A549 (cell line): ENCODE measurements at regions of chr7 and their contacts with region 1.

Region 1: GRCh38 chr7:22559829-22560489 is 60.0 kb upstream of the STEAP1B start:
- DNase-seq: peak; percentile 80 to 85
- ATAC-seq: peak; percentile 82 to 92
- H3K4me3 ChIP-seq: no peak overlapping the region
- H3K27ac ChIP-seq: peak overlapping the region in 1 of 2 experiments; percentile 74; a peak in 3 of 6 replicates
- H3K4me1 ChIP-seq: peaks cover 46% of the 10 kb centered on the region
- CTCF ChIP-seq: peak; percentile 99
- EP300 ChIP-seq: no peak
- POLR2A ChIP-seq: no peak
- RAD21 ChIP-seq: peak; percentile 90 to 99

Region 2: GRCh38 chr7:22542254-22542653 is 17.7 kb before region 1 on chr7:
- CTCF ChIA-PET with region 1: interaction called, 27 read pairs
- POLR2A ChIA-PET with region 1: no interaction called
- DNase-seq: no peak
- ATAC-seq: no peak
- H3K4me3 ChIP-seq: no peak overlapping the region
- H3K27ac ChIP-seq: no peak overlapping the region
- H3K4me1 ChIP-seq: no peaks in the 10 kb centered on the region
- CTCF ChIP-seq: no peak
- EP300 ChIP-seq: no peak
- POLR2A ChIP-seq: no peak
- RAD21 ChIP-seq: no peak

Region 3: GRCh38 chr7:22586786-22587140 is 26.8 kb after region 1 on chr7:
- CTCF ChIA-PET with region 1: interaction called, 29 read pairs
- POLR2A ChIA-PET with region 1: no interaction called
- DNase-seq: peak in 1 of 2 experiments; percentile 46
- ATAC-seq: peak in 1 of 2 experiments; percentile 72; a peak in 3 of 6 replicates
- H3K4me3 ChIP-seq: no peak overlapping the region
- H3K27ac ChIP-seq: peak overlapping the region in 1 of 2 experiments; percentile 70; a peak in 3 of 6 replicates
- H3K4me1 ChIP-seq: peaks cover 18% of the 10 kb centered on the region
- CTCF ChIP-seq: peak; percentile 36; the same call in 2 of the 3 replicates
- EP300 ChIP-seq: no peak
- POLR2A ChIP-seq: no peak
- RAD21 ChIP-seq: peak; percentile 26 to 34; a peak in 3 of 5 replicates

Region 4: GRCh38 chr7:22667562-22668239 is 107.7 kb after region 1 on chr7:
- CTCF ChIA-PET with region 1: interaction called, 17 read pairs
- POLR2A ChIA-PET with region 1: interaction called, 4 read pairs
- DNase-seq: peak; percentile 34 to 68
- ATAC-seq: peak; percentile 73 to 75
- H3K4me3 ChIP-seq: no peak overlapping the region
- H3K27ac ChIP-seq: peak overlapping the region; percentile 38 to 80; a peak in 5 of 6 replicates
- H3K4me1 ChIP-seq: peaks cover 56% of the 10 kb centered on the region
- CTCF ChIP-seq: no peak
- EP300 ChIP-seq: peak; percentile 28 to 51; a peak in 2 of 5 replicates
- POLR2A ChIP-seq: no peak
- RAD21 ChIP-seq: peak in 1 of 2 experiments; percentile 30; a peak in 2 of 5 replicates

Region 5: GRCh38 chr7:22726345-22727185 is 166.6 kb after region 1 on chr7:
- CTCF ChIA-PET with region 1: interaction called, 477 read pairs
- POLR2A ChIA-PET with region 1: interaction called, 16 read pairs
- DNase-seq: peak; percentile 76
- ATAC-seq: peak; percentile 88 to 92
- H3K4me3 ChIP-seq: 0 out of 3 replicates have a peak overlapping the region, but pooled peaks have one; percentile 17
- H3K27ac ChIP-seq: peak overlapping the region; percentile 48 to 84
- H3K4me1 ChIP-seq: peaks cover 28% of the 10 kb centered on the region
- CTCF ChIP-seq: peak; percentile 65
- EP300 ChIP-seq: peak in 1 of 2 experiments; percentile 28; a peak in 1 of 5 replicates
- POLR2A ChIP-seq: no peak
- RAD21 ChIP-seq: peak; percentile 82 to 86

Region 6: DNA sequence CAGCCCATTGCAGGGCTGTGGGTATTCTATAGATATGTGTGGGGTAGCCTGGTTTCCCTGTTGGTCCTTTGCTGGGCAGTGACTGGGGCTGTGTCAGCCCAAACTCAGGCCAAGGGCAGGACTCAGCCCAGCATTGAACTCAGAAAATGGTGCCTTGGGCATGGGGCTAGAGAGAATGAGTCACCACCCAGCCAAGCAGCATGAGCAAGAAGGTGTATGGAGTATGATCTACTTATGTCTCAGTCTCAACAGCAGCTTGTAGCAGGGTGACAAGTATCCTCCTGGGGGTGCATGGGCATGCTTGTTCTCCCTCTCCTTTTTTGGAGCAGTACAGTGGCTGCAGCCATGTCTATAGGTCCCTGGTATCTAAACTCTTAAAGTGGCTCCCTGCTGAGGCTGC is 1182.1 kb after region 1 on chr7:
- CTCF ChIA-PET with region 1: no interaction called
- POLR2A ChIA-PET with region 1: no interaction called
- DNase-seq: no peak
- ATAC-seq: no peak
- H3K4me3 ChIP-seq: no peak overlapping the region
- H3K27ac ChIP-seq: no peak overlapping the region
- H3K4me1 ChIP-seq: no peaks in the 10 kb centered on the region
- CTCF ChIP-seq: no peak
- EP300 ChIP-seq: no peak
- POLR2A ChIP-seq: no peak
- RAD21 ChIP-seq: no peak